HepG2 (cell line): ENCODE measurements at regions of chr4 and their contacts with region 1.

Region 1: DNA sequence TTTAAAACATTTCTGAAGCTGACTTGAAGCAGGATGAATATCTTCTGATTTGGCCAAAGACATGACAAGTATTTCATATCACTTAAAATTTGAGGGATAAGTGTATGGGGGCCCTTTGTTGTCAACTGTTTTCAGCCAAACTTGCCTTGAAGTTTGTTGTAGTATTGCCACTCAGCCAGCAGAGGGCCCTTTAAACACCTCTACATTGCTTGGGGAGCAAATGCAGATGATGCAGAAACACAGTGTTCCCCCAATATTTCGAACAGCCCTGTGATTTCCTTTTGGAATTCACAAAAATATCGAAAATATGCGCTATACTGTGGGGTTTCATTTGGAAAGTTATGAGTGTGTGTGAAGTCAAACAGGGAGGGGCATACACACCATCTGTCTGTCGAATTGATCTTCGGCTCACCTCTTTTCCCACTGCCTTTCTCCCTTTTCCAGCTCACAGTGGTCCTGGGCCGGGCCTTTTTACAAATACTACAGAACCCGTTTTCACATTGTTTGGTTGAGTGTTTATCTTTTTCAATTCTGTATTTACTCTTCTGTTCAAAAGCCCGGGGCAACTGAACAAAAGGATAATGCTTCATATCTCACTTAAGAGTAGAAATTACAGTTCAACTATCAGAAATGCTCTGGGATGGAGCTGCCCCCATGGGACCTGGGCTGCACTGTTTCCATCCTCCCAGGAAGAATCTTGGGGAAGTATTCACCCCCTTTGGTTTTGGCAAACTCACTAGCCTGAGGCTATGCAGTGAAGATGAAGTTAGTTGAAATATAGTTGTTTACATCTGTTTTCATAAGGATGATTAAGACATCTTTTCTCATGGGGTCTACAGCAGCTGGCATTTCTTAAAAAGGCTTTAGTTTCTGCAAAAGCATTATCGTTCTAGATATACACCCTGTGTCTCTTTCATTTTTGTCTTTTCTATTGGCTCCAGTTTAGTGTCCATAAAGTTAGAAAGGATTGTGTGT is 137.6 kb downstream of the EGF start:
- DNase-seq: peak; percentile 30
- ATAC-seq: peak; percentile 59; the same call in 2 of the 3 replicates
- H3K4me3 ChIP-seq: no peak overlapping the region
- H3K27ac ChIP-seq: no peak overlapping the region
- H3K4me1 ChIP-seq: peaks cover 6% of the 10 kb centered on the region
- H3K27me3 ChIP-seq: no peaks in the 10 kb centered on the region
- CTCF ChIP-seq: peak; percentile 69
- EP300 ChIP-seq: no peak
- POLR2A ChIP-seq: no peak
- RAD21 ChIP-seq: no peak; the same call in 1 of the 2 replicates

Region 2: DNA sequence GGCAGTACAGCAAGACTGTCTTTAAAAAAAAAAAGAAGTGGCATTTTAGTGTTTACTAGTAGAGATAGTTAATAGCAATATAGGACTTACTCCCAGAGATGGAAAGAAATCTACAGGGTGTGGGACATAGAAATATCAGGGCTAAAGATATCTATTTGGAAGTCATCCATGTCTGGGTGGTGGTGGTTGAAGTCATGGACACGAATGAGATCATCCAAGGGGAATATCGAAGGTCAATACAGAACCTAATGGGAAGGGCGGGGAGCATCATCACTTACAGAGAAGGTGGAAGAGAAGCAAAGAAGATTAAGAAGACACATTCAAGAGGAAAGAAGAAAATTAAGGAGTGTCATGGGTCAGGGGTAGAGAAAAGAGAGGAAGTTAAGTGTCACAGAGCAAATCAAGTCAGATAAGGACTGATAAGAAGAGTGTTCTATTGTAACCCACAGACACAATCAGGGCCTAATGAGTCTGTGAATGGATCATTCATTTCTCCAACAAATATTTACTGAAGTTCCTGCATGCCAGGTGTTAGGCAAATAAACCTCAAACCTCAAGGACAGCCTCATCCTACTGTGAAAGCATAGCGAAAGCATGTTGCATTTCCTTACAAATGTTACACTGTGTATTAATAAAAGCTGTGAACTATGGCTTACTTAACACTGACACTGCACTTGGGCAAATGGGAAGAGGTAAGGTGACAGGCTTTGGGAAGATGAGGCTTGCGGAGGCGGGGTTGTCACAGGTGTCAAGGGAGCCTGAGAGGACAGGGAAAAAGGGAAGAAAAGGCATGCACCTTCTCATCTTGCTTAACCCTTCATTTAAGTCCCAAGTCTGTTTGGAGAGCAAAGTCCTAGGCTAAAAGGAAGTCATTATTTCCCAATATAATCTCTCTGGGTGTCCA is 82.8 kb after region 1 on chr4:
- CTCF ChIA-PET with region 1: no interaction called
- POLR2A ChIA-PET with region 1: no interaction called
- in situ Hi-C with region 1: no loop called
- intact Hi-C with region 1: no loop called
- DNase-seq: peak; percentile 44
- ATAC-seq: peak; percentile 70
- H3K4me3 ChIP-seq: no peak overlapping the region
- H3K27ac ChIP-seq: no peak overlapping the region
- H3K4me1 ChIP-seq: peaks cover 27% of the 10 kb centered on the region
- H3K27me3 ChIP-seq: no peaks in the 10 kb centered on the region
- CTCF ChIP-seq: no peak
- EP300 ChIP-seq: peak in 1 of 2 experiments; percentile 6; a peak in 1 of 4 replicates
- POLR2A ChIP-seq: no peak
- RAD21 ChIP-seq: no peak

Region 3: GRCh38 chr4:110193822-110194761 is 143.9 kb after region 1 on chr4:
- CTCF ChIA-PET with region 1: no interaction called
- POLR2A ChIA-PET with region 1: no interaction called
- in situ Hi-C with region 1: no loop called
- intact Hi-C with region 1: loop called (anchors 5 kb)
- DNase-seq: peak; percentile 74
- ATAC-seq: peak; percentile 61
- H3K4me3 ChIP-seq: no peak overlapping the region; a peak in 1 of 6 replicates
- H3K27ac ChIP-seq: peak overlapping the region; percentile 65
- H3K4me1 ChIP-seq: peaks cover 50% of the 10 kb centered on the region
- H3K27me3 ChIP-seq: no peaks in the 10 kb centered on the region; a peak in 1 of 5 replicates
- CTCF ChIP-seq: no peak
- EP300 ChIP-seq: no peak
- POLR2A ChIP-seq: peak; percentile 78 to 89
- RAD21 ChIP-seq: no peak

Region 4: DNA sequence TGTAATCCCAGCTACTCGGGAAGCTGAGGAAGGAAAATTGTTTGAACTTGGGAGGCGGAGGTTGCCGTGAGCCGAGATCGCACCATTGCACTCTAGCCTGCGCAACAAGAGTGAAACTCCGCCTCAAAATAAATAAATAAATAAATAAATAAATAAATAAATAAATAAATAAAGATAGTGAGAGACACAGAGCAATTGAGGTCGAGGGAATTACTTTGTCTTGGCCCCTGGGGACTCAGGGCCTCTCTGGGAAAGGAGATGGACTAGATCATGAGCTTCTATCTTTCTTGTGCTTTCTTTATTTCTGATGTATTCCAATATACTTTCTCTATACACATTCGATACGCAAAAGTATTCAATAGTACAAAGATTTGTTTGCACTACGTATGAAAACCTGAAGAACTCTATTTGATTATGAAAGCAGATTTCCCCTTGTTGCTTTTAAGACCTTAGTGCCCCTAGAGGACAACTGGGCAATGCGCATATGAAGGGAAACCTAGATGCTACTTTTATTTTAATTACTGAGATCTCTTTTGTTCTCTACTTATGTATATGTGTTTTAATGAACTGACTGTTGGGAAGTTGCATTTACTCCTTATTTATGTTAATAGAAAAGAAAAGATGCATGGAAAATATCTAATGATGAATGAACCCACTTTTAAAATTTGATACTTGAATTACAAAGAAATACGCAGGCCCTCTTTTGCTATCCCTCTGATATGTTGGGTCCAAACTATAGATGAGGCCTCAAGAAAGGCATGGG is 160.9 kb after region 1 on chr4:
- CTCF ChIA-PET with region 1: interaction called, 26 read pairs
- POLR2A ChIA-PET with region 1: no interaction called
- in situ Hi-C with region 1: loop called (anchors 5 kb)
- intact Hi-C with region 1: loop called (anchors 1 kb)
- DNase-seq: peak; percentile 53
- ATAC-seq: peak; percentile 81
- H3K4me3 ChIP-seq: peak overlapping the region in 1 of 3 experiments; percentile 15; a peak in 2 of 6 replicates
- H3K27ac ChIP-seq: no peak overlapping the region
- H3K4me1 ChIP-seq: no peaks in the 10 kb centered on the region
- H3K27me3 ChIP-seq: no peaks in the 10 kb centered on the region
- CTCF ChIP-seq: peak; percentile 56
- EP300 ChIP-seq: no peak
- POLR2A ChIP-seq: no peak
- RAD21 ChIP-seq: 0 out of 2 replicates have a peak, but pooled peaks have one; percentile 25